Endothelial cell of umbilical vein (primary cell): ENCODE measurements at regions of chr17 and their contacts with region 1.

Region 1: DNA sequence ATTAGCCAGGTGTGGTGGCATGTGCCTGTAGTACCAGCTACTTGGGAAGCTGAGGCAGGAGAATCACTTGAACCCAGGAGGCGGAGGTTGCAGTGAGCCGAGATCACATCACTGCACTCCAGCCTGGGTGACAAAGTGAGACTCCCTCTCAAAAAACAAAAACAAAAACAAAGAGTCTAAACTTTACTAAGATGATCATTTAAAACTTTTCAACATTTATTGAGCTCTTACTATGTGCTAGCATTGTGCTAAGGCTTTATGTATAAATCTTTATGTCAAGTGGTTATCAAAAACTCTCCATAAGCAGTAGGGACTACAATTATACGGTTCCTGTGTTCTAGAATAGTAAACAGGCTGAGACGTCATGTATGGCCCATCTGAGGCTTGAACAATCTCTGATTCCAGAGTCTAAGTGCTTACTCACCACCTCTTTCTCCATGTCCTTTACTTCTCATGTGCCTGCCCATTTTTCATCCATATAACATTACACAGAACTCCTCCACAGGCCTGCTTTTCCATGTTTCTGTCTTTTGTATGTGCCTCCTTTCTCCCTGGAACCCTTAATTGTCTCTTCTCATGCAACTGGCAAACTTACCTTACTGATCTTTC is 66.7 kb downstream of the NUP88 start:
- DNase-seq: no peak
- H3K4me3 ChIP-seq: no peak overlapping the region
- H3K27ac ChIP-seq: no peak overlapping the region
- H3K4me1 ChIP-seq: no peaks in the 10 kb centered on the region
- H3K27me3 ChIP-seq: no peaks in the 10 kb centered on the region
- CTCF ChIP-seq: no peak
- POLR2A ChIP-seq: no peak

Region 2: DNA sequence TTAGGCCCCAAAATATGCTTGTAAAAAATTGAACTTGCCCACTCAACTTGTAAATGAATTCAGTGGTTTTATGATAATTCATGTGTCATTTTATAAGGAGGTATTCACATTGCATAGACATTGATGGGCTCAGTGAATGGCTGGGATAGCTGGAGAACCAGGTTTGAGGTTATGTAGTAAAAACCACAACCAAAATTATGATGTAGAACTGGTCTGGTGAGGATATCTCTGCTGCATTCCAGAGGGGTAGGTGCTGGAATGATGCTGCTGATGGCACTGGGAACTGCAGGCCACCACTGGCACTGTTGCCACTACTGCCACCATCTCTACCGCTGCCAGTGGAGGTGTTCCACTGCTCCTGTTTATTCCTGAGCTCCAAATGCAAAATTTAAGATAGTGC is 92.2 kb before region 1 on chr17:
- CTCF ChIA-PET with region 1: no interaction called
- POLR2A ChIA-PET with region 1: no interaction called
- dilution Hi-C with region 1: no loop called
- intact Hi-C with region 1: no loop called
- DNase-seq: no peak
- H3K4me3 ChIP-seq: no peak overlapping the region
- H3K27ac ChIP-seq: no peak overlapping the region
- H3K4me1 ChIP-seq: no peaks in the 10 kb centered on the region
- H3K27me3 ChIP-seq: peaks cover 0 to 1% of the 10 kb centered on the region in 2 experiments
- CTCF ChIP-seq: no peak
- POLR2A ChIP-seq: no peak

Region 3: DNA sequence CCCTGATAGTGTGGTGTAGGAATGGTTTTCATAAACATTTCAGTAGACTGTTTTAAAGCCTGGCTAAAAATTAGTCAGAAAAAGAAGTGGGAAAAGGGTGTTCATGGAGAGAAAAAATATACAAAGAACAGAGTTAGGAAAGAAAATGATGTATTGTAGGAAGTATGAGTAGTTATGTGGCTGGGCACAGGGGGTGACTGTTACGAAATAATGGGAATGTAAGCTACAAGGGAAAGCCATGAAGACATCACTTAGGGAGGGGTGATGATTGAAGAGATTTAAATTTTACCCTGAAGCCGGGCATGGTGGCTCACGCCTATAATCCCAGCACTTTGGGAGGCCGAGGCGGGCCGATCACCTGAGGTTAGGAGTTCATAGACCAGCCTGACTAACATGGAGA is 11.4 kb after region 1 on chr17:
- CTCF ChIA-PET with region 1: no interaction called
- POLR2A ChIA-PET with region 1: no interaction called
- dilution Hi-C with region 1: no loop called
- intact Hi-C with region 1: loop called (anchors 1 kb)
- DNase-seq: no peak
- H3K4me3 ChIP-seq: no peak overlapping the region
- H3K27ac ChIP-seq: no peak overlapping the region
- H3K4me1 ChIP-seq: no peaks in the 10 kb centered on the region
- H3K27me3 ChIP-seq: no peaks in the 10 kb centered on the region
- CTCF ChIP-seq: no peak
- POLR2A ChIP-seq: no peak

Region 4: GRCh38 chr17:5706577-5707216 is 353.9 kb after region 1 on chr17:
- CTCF ChIA-PET with region 1: no interaction called
- POLR2A ChIA-PET with region 1: no interaction called
- dilution Hi-C with region 1: no loop called
- intact Hi-C with region 1: no loop called
- DNase-seq: peak; percentile 68
- H3K4me3 ChIP-seq: no peak overlapping the region
- H3K27ac ChIP-seq: no peak overlapping the region
- H3K4me1 ChIP-seq: no peaks in the 10 kb centered on the region
- H3K27me3 ChIP-seq: peaks cover 0 to 5% of the 10 kb centered on the region in 2 experiments
- CTCF ChIP-seq: peak; percentile 72 to 81
- POLR2A ChIP-seq: no peak